ENCODE measurements at regions of chr2 and their contacts with region 1.

Region 1: GRCh38 chr2:218395797-218396687 is 3.6 kb upstream of the CTDSP1 start:
- DNase-seq: peak; percentile 97
- ATAC-seq: peak; percentile 41
- H3K4me3 ChIP-seq: peak overlapping the region; percentile 80
- H3K27ac ChIP-seq: peak overlapping the region; percentile 93
- H3K4me1 ChIP-seq: peaks cover 33% of the 10 kb centered on the region
- H3K27me3 ChIP-seq: no peaks in the 10 kb centered on the region
- CTCF ChIP-seq: peak; percentile 87

Region 2: GRCh38 chr2:217666338-217666737 is 729.7 kb before region 1 on chr2:
- CTCF ChIA-PET with region 1: no interaction called
- POLR2A ChIA-PET with region 1: no interaction called
- intact Hi-C with region 1: no loop called
- DNase-seq: no peak
- ATAC-seq: no peak
- H3K4me3 ChIP-seq: no peak overlapping the region
- H3K27ac ChIP-seq: no peak overlapping the region
- H3K4me1 ChIP-seq: peaks cover 10% of the 10 kb centered on the region
- H3K27me3 ChIP-seq: no peaks in the 10 kb centered on the region
- CTCF ChIP-seq: no peak

Region 3: DNA sequence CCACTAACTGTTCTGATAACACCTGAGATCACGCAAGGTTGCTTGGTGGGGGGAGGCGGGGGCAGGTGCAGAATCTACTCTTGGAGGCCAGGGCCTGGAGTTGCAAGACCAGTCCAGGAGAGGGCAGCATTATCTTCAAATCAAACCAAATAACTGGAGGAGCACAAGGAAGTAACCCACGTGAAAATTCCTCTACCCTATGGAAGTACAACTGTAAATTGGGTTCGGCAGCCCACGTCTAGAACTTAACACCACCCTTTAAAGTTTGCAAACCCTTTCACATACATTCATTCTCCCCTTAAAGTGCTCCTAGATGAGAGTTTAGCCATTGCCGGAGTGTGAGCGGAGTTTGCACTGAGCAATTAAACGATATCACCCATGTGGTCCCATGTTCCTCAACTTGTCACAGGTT is 209.7 kb before region 1 on chr2:
- CTCF ChIA-PET with region 1: no interaction called
- POLR2A ChIA-PET with region 1: no interaction called
- intact Hi-C with region 1: loop called (anchors 1 kb)
- DNase-seq: peak; percentile 81
- ATAC-seq: peak; percentile 97
- H3K4me3 ChIP-seq: no peak overlapping the region; the same call in 1 of the 2 replicates
- H3K27ac ChIP-seq: no peak overlapping the region
- H3K4me1 ChIP-seq: 0 out of 2 replicates have a peak, but pooled peaks cover 4% of the 10 kb centered on the region
- H3K27me3 ChIP-seq: peaks cover 8% of the 10 kb centered on the region
- CTCF ChIP-seq: peak; percentile 87

Region 4: GRCh38 chr2:218286570-218287459 is 109.2 kb before region 1 on chr2:
- CTCF ChIA-PET with region 1: interaction called, 7 read pairs
- POLR2A ChIA-PET with region 1: no interaction called
- intact Hi-C with region 1: loop called (anchors 5 kb)
- DNase-seq: peak; percentile 96
- ATAC-seq: peak; percentile 80
- H3K4me3 ChIP-seq: peak overlapping the region; percentile 56
- H3K27ac ChIP-seq: peak overlapping the region; percentile 98
- H3K4me1 ChIP-seq: peaks cover 78% of the 10 kb centered on the region
- H3K27me3 ChIP-seq: no peaks in the 10 kb centered on the region
- CTCF ChIP-seq: no peak

Region 5: GRCh38 chr2:218339806-218340205 is 56.2 kb before region 1 on chr2:
- CTCF ChIA-PET with region 1: interaction called, 10 read pairs
- POLR2A ChIA-PET with region 1: no interaction called
- intact Hi-C with region 1: no loop called
- DNase-seq: no peak
- ATAC-seq: no peak
- H3K4me3 ChIP-seq: no peak overlapping the region
- H3K27ac ChIP-seq: no peak overlapping the region
- H3K4me1 ChIP-seq: no peaks in the 10 kb centered on the region
- H3K27me3 ChIP-seq: no peaks in the 10 kb centered on the region
- CTCF ChIP-seq: no peak

Region 6: GRCh38 chr2:218568190-218569037 is 172.4 kb after region 1 on chr2 and contains the starts of genes CNOT9 and USP37:
- CTCF ChIA-PET with region 1: no interaction called
- POLR2A ChIA-PET with region 1: no interaction called
- intact Hi-C with region 1: loop called (anchors 5 kb)
- DNase-seq: peak; percentile 98
- ATAC-seq: peak; percentile 88
- H3K4me3 ChIP-seq: peak within 1 kb of the TSS; percentile 84
- H3K27ac ChIP-seq: peak within 1 kb of the TSS; percentile 85
- H3K4me1 ChIP-seq: peaks cover 25% of the 10 kb centered on the region
- H3K27me3 ChIP-seq: no peaks in the 10 kb centered on the region
- CTCF ChIP-seq: no peak
- total RNA-seq, gene CNOT9: 78.0 and 86.8 TPM in 2 replicates
- total RNA-seq, gene USP37: 10.7 and 11.6 TPM in 2 replicates

Measured in PC-3 (cell line).